GM13976 (cell line): ENCODE measurements at regions of chrX and their contacts with region 1.

Region 1: GRCh38 chrX:100768679-100769338 is 36.9 kb upstream of the SYTL4 start:
- DNase-seq: peak; percentile 57
- CTCF ChIP-seq: peak; percentile 98

Region 2: GRCh38 chrX:100512471-100512870 is 256.3 kb before region 1 on chrX:
- in situ Hi-C with region 1: loop called (anchors 25 kb)
- DNase-seq: peak; percentile 34
- CTCF ChIP-seq: peak; percentile 37

Region 3: GRCh38 chrX:100685284-100685996 is 83.4 kb before region 1 on chrX:
- in situ Hi-C with region 1: loop called (anchors 5 kb)
- DNase-seq: peak; percentile 60
- CTCF ChIP-seq: peak; percentile 62

Region 4: DNA sequence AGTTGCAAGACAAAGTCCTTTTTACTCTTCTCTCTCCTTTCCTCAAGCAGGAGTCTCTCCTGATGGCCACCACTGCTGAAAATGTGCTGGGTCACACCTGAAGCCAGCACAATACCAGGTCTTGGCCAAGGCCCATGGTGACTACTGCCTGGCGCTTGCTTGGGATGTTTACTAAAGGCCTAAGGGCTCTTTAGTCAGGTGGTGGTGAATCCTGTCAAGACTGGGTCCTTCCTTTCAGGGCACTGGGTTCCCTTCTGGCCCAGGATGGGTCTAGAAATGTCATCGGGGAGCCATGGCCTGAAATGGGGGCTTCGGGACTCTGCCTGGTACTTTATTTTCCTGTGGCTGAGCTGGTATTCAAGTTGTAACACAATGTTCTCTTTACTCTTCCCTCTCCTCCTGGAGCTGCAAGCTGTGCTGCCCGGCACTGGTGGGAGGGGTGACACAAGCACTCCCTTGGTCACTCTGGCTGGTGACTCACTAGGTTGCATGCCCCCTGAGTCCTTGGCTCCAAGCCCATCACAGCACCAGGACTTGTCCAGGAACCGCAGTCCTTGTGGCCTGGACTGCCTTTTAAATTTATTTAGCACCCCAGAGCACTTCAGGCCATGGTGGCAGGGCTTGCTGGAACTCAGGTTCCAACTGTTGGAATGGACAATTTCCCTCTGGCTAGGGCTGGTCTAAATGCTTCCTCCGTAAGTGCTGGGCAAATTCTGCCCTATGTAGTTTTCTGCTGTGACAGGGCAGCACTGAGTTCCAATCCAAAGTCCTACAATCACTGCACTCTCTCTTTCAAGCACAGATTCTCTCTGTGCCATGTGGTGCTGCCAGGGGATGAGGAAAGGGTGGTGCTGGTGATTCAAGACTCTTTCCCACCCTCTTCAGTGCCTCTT is 212.0 kb after region 1 on chrX:
- in situ Hi-C with region 1: no loop called
- DNase-seq: no peak
- CTCF ChIP-seq: no peak